IMR-90 (cell line): ENCODE measurements at regions of chrX and their contacts with region 1.

Region 1: GRCh38 chrX:25144043-25144940 is 128.5 kb upstream of the ARX start:
- DNase-seq: peak; percentile 64
- ATAC-seq: peak; percentile 83
- H3K4me3 ChIP-seq: no peak overlapping the region
- H3K27ac ChIP-seq: no peak overlapping the region
- H3K4me1 ChIP-seq: no peaks in the 10 kb centered on the region
- H3K27me3 ChIP-seq: 0 out of 2 replicates have a peak, but pooled peaks cover 2% of the 10 kb centered on the region
- CTCF ChIP-seq: peak; percentile 78
- POLR2A ChIP-seq: no peak
- RAD21 ChIP-seq: peak; percentile 78

Region 2: DNA sequence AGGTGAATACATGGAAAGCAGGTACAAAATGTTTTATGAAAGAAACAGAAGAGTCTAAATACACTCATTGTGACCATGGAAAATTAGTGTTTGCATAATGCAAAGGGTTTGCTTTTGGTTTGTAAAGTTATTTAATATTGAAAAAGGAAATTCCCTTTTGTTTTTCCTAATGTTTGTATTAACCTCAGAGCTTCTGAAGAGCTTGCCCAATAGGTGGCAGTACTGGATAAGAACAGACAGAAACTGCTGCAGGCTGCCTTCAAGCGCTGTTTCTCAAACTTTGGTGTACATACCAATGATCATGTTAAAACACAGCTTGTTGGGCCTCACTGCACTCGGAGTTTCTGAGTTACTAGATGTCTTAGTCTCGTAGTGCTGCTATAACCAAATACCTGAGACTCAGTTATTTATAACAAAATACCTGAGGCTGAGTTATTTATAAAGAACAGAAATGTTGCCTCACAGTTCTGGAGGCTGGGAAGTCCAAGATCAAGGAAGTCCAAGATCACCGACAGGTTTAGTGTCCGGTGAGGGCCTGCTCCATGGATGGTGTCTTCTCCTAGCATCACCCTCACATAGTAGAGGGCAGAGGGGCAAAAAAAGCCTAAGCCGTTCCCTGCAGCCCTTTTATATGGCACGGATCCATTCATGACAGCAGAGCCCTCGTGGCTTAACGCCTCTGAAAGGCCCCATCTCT is 884.6 kb before region 1 on chrX:
- CTCF ChIA-PET with region 1: no interaction called
- POLR2A ChIA-PET with region 1: no interaction called
- dilution Hi-C with region 1: no loop called
- in situ Hi-C with region 1: loop called (anchors 10 kb)
- intact Hi-C with region 1: loop called (anchors 2 kb)
- DNase-seq: peak; percentile 80
- ATAC-seq: peak; percentile 94
- H3K4me3 ChIP-seq: no peak overlapping the region
- H3K27ac ChIP-seq: no peak overlapping the region
- H3K4me1 ChIP-seq: no peaks in the 10 kb centered on the region; the same call in 1 of the 2 replicates
- H3K27me3 ChIP-seq: peaks cover 7% of the 10 kb centered on the region
- CTCF ChIP-seq: peak; percentile 73
- POLR2A ChIP-seq: no peak
- RAD21 ChIP-seq: peak; percentile 79

Region 3: DNA sequence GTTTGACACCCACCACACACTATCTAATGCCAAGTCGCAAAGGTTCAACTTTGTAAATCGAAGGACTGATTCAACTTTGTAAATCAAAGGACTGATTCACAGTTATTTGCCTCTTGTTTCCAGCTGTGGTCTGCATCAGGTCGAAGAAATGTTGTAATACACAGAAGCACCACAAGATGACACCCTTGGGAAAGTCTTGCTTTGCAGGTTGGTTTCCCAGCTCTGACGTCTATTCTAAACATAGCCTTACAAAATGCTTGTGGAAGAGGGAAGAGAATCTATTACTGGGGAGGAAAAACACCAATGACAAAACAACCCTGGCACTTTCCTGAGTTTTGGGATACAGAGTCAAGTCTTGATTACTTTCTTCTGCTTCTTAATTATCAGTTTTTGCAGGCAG is 748.5 kb before region 1 on chrX:
- CTCF ChIA-PET with region 1: no interaction called
- POLR2A ChIA-PET with region 1: no interaction called
- dilution Hi-C with region 1: no loop called
- in situ Hi-C with region 1: loop called (anchors 25 kb)
- intact Hi-C with region 1: loop called (anchors 1 kb)
- DNase-seq: peak; percentile 82
- ATAC-seq: peak; percentile 93
- H3K4me3 ChIP-seq: no peak overlapping the region
- H3K27ac ChIP-seq: no peak overlapping the region
- H3K4me1 ChIP-seq: no peaks in the 10 kb centered on the region
- H3K27me3 ChIP-seq: peaks cover 27% of the 10 kb centered on the region
- CTCF ChIP-seq: peak; percentile 83
- POLR2A ChIP-seq: no peak
- RAD21 ChIP-seq: peak; percentile 86

Region 4: DNA sequence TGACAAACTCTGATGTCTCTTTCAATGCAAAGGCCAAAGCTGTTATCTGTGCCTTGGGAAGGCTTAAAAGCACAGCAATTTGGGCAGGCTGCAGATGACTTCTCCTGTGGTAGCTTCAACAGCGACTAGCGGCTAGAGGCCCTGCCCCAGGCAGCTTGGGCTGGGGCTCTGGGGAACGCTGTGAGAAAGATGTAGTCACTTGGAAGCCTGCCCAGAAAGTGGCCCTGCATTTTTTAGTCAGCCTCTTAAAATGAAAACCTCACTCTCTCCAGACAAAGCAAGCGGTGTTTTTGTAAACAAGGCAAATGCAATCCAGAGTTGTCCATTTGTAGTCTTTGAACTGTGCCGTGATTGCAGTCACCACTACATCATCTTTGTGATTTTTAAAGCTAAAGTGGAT is 524.6 kb before region 1 on chrX:
- CTCF ChIA-PET with region 1: no interaction called
- POLR2A ChIA-PET with region 1: no interaction called
- dilution Hi-C with region 1: no loop called
- in situ Hi-C with region 1: no loop called
- intact Hi-C with region 1: no loop called
- DNase-seq: peak; percentile 38
- ATAC-seq: peak; percentile 57
- H3K4me3 ChIP-seq: no peak overlapping the region
- H3K27ac ChIP-seq: no peak overlapping the region
- H3K4me1 ChIP-seq: no peaks in the 10 kb centered on the region
- H3K27me3 ChIP-seq: peaks cover 2% of the 10 kb centered on the region; the same call in 1 of the 2 replicates
- CTCF ChIP-seq: no peak
- POLR2A ChIP-seq: no peak
- RAD21 ChIP-seq: no peak

Region 5: DNA sequence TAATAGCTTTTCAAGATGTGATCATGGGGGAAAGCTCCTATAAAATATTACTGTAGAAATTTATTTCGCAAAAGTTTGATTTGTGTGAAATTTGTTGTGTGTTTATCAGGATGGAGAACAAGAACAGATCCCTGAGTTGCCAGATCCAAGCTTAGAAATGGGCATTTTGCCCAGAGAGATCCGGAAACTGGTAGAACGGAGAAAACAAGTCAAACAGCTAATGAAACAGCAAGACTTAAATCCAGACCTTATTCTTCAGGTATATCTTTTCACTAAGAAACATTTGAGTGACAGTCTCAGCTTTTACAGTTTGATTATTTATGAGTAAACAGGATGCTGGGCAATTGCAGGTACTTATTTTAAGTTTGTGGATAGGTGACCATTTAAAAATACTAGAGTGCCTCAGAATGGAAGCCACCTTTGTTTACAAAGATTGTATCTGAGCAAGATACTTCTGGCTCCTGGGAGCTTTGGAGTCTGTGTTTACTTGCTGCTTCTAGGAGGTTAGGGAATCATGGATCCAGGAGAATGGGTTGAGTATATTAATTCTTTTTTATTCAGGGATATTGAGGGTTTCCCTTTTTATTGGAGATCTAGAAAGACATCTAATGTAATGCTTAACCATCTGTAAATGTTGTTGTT is 396.0 kb before region 1 on chrX:
- CTCF ChIA-PET with region 1: interaction called, 9 read pairs
- POLR2A ChIA-PET with region 1: no interaction called
- dilution Hi-C with region 1: loop called (anchors 10 kb)
- in situ Hi-C with region 1: loop called (anchors 5 kb)
- intact Hi-C with region 1: loop called (anchors 1 kb)
- DNase-seq: no peak
- ATAC-seq: no peak
- H3K4me3 ChIP-seq: no peak overlapping the region
- H3K27ac ChIP-seq: no peak overlapping the region
- H3K4me1 ChIP-seq: no peaks in the 10 kb centered on the region
- H3K27me3 ChIP-seq: no peaks in the 10 kb centered on the region
- CTCF ChIP-seq: no peak
- POLR2A ChIP-seq: no peak
- RAD21 ChIP-seq: no peak

Region 6: DNA sequence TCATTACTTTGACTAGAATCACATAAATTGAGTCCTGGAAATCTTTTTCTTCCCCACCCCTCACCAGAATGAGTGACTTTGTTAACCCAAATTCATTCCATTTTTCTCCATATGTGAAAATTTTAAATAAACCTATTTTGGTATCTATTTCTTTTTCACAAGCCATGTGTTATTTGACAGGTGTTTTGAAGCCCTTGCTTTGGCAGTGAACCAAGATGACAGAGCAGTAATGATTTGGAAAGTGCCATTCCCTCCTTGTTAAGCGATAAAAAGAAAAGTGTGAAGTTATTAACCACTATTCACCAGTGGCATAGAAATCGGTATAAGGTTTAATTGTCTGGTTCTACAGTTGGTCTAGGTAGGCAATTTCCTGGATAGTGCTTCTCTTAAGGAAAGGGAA is 384.5 kb before region 1 on chrX:
- CTCF ChIA-PET with region 1: no interaction called
- POLR2A ChIA-PET with region 1: no interaction called
- dilution Hi-C with region 1: loop called (anchors 10 kb)
- in situ Hi-C with region 1: loop called (anchors 5 kb)
- intact Hi-C with region 1: no loop called
- DNase-seq: no peak
- ATAC-seq: no peak
- H3K4me3 ChIP-seq: no peak overlapping the region
- H3K27ac ChIP-seq: no peak overlapping the region
- H3K4me1 ChIP-seq: no peaks in the 10 kb centered on the region
- H3K27me3 ChIP-seq: no peaks in the 10 kb centered on the region
- CTCF ChIP-seq: no peak
- POLR2A ChIP-seq: no peak
- RAD21 ChIP-seq: no peak

Region 7: GRCh38 chrX:24838629-24839028 is 305.7 kb before region 1 on chrX:
- CTCF ChIA-PET with region 1: interaction called, 14 read pairs
- POLR2A ChIA-PET with region 1: no interaction called
- dilution Hi-C with region 1: no loop called
- in situ Hi-C with region 1: loop called (anchors 5 kb)
- intact Hi-C with region 1: loop called (anchors 1 kb)
- DNase-seq: peak; percentile 50
- ATAC-seq: 0 out of 2 replicates have a peak, but pooled peaks have one; percentile 44
- H3K4me3 ChIP-seq: no peak overlapping the region
- H3K27ac ChIP-seq: no peak overlapping the region
- H3K4me1 ChIP-seq: no peaks in the 10 kb centered on the region
- H3K27me3 ChIP-seq: no peaks in the 10 kb centered on the region
- CTCF ChIP-seq: peak; percentile 57
- POLR2A ChIP-seq: no peak
- RAD21 ChIP-seq: peak; percentile 54

Region 8: GRCh38 chrX:24870143-24870542 is 274.1 kb before region 1 on chrX:
- CTCF ChIA-PET with region 1: no interaction called
- POLR2A ChIA-PET with region 1: no interaction called
- dilution Hi-C with region 1: no loop called
- in situ Hi-C with region 1: no loop called
- intact Hi-C with region 1: no loop called
- DNase-seq: peak; percentile 67
- ATAC-seq: peak; percentile 77
- H3K4me3 ChIP-seq: no peak overlapping the region
- H3K27ac ChIP-seq: no peak overlapping the region
- H3K4me1 ChIP-seq: peaks cover 4% of the 10 kb centered on the region; the same call in 1 of the 2 replicates
- H3K27me3 ChIP-seq: no peaks in the 10 kb centered on the region
- CTCF ChIP-seq: no peak
- POLR2A ChIP-seq: no peak
- RAD21 ChIP-seq: no peak

Region 9: GRCh38 chrX:25034889-25035288 is 109.4 kb before region 1 on chrX:
- CTCF ChIA-PET with region 1: no interaction called
- POLR2A ChIA-PET with region 1: no interaction called
- dilution Hi-C with region 1: no loop called
- in situ Hi-C with region 1: no loop called
- intact Hi-C with region 1: loop called (anchors 10 kb)
- DNase-seq: no peak
- ATAC-seq: no peak
- H3K4me3 ChIP-seq: no peak overlapping the region
- H3K27ac ChIP-seq: no peak overlapping the region
- H3K4me1 ChIP-seq: no peaks in the 10 kb centered on the region
- H3K27me3 ChIP-seq: no peaks in the 10 kb centered on the region
- CTCF ChIP-seq: peak; percentile 14; the same call in 1 of the 2 replicates
- POLR2A ChIP-seq: no peak
- RAD21 ChIP-seq: no peak